Naive thymus-derived CD8-positive, alpha-beta T cell (primary cell): ENCODE measurements at regions of chrX and their contacts with region 1.

Region 1: DNA sequence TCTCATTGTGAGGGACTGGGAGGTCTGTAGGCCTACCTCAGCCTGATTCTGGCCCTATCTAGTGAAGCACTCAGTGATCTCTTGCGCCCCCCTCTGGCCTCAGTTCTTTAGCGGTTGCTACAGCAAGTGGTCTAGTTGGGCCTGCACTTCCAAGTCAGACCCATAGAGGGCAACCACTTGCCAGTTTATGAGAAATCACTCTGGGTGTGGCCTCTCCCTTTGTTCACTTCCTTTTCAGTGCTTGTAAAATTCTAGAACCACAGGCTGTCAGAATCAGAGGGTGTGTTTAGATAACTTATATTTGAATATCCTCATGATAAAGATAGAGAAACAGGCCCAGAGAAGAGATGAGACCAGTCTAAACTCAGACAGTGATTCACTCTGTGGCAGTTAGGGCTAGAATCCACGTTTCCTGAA is 60.9 kb upstream of the LAS1L start:
- DNase-seq: peak; percentile 74 to 95 (median 88)
- ATAC-seq: peak; percentile 70 to 83
- H3K4me3 Mint-ChIP-seq: peak overlapping the region; percentile 38 to 82 (median 75)
- H3K27ac Mint-ChIP-seq: peak overlapping the region; percentile 71 to 99 (median 94)
- H3K4me1 Mint-ChIP-seq: peaks cover 24 to 53% (median 41%) of the 10 kb centered on the region in 4 donors
- H3K27me3 Mint-ChIP-seq: no peaks in the 10 kb centered on the region

Region 2: GRCh38 chrX:65667503-65668376 is 72.3 kb after region 1 on chrX and contains the start of gene MSN:
- POLR2A ChIA-PET with region 1: interaction called, 42 read pairs
- DNase-seq: peak; percentile 51 to 80 (median 64)
- ATAC-seq: peak; percentile 81 to 84
- H3K4me3 Mint-ChIP-seq: peak within 1 kb of the TSS; percentile 94 to 98 (median 95)
- H3K27ac Mint-ChIP-seq: peak within 1 kb of the TSS; percentile 85 to 96 (median 94)
- H3K4me1 Mint-ChIP-seq: peaks cover 19 to 42% (median 36%) of the 10 kb centered on the region in 4 donors
- H3K27me3 Mint-ChIP-seq: no peaks in the 10 kb centered on the region
- polyA plus RNA-seq, gene MSN: 467 to 552 (median 518) TPM